Heart left ventricle (tissue), 16 donors: ENCODE measurements at regions of chr3 and their contacts with region 1.

Region 1: DNA sequence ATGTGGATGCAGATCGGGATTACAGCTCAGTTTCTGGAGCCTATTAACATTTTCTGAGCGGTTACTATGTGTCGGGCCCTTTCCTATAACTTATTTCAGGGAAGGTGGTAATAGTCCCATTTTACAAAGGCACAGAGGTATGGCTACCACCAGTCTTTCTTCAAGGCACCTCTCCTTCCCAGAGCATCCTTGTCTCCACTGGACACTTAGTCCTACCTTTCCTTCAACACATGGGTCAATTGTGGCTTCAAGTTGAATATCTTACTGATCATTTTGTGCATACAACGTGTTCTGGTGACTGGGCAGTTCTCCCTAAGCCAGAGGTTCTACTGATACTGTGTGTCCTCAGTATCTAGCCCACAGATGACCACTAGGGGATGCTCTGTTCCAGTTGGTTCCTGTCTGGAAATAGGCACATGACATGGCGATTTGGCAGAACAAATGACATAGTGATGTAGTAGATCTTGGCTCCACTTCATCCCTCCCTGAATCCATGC is 60.7 kb upstream of the CMTM8 start:
- DNase-seq: peak in 4 of 5 donors; percentile 64 to 76 (median 69)
- ATAC-seq: peak; percentile 82 to 93 (median 92)
- H3K4me3 ChIP-seq: no peak overlapping the region
- H3K27ac ChIP-seq: no peak overlapping the region
- H3K4me1 ChIP-seq: peaks cover 0 to 12% (median 7%) of the 10 kb centered on the region in 12 donors
- H3K27me3 ChIP-seq: no peaks in the 10 kb centered on the region
- CTCF ChIP-seq: peak; percentile 67 to 82 (median 76)
- POLR2A ChIP-seq: no peak

Region 2: DNA sequence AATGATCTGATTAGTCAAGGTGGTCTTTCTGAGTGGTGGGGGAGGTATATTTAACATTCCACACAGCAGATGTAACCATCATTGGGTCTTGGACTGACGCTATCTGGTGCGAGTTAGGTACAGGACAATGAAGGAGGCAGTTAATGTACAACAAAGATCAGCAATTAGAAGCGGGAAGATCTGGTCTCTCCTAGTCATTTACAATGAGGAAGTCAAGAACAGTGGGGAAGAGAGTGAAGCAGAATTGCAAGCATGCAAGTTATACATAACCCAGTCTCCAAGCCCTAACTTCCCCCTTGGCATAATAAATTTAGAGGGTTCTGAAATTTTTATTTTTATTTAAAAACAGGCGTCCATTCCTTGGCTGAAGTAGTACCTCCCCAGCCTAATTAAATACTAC is 57.3 kb before region 1 on chr3:
- intact Hi-C with region 1: no loop called
- DNase-seq: no peak
- ATAC-seq: peak in 2 of 4 donors; percentile 45 to 56
- H3K4me3 ChIP-seq: no peak overlapping the region
- H3K27ac ChIP-seq: peak overlapping the region in 2 of 12 donors; percentile 1 to 47
- H3K4me1 ChIP-seq: peaks cover 0 to 61% (median 11%) of the 10 kb centered on the region in 12 donors
- H3K27me3 ChIP-seq: no peaks in the 10 kb centered on the region
- CTCF ChIP-seq: no peak
- POLR2A ChIP-seq: no peak

Region 3: DNA sequence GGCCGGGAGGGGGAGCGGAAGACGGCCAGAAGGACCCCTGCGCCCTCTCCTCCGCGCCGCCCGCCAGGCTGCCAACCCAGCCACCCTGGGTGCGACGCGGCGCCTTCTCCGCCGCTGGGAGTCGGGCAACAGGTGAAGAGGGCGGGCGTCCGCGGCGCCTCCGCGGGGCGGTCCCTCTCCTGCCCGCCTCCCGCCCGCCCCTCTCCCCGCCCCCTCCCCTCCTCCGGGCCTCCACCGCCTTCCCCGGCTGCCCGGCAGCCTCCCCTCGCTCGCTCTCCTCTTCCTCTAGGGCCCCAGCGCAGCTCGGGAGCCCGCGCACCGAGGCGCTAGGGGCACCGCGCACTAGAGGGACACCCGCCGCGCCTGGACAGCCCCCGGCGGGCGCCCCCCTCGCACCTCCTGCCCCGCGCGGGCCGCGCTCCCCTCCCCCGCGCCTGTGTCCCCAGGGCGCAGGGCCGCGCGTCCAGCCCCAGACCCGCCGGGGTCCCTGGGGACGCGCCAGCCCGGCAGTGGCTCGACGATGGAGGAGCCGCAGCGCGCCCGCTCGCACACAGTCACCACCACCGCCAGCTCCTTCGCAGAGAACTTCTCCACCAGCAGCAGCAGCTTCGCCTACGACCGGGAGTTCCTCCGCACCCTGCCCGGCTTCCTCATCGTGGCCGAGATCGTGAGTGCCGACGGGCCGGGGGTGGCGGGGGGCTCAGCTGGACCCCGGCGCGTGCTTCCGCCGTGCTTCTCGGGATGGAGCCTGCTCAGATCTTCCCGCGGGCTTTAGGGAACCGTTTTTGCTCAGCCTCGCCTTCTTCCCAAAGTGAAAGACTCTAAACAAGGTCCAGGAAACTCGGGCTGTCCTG is 60.9 kb after region 1 on chr3 and contains the start of gene CMTM8:
- intact Hi-C with region 1: loop called in 6 of 10 experiments (anchors 2 to 5 kb)
- DNase-seq: peak; percentile 52 to 73 (median 61)
- ATAC-seq: peak; percentile 27 to 87 (median 80)
- H3K4me3 ChIP-seq: peak within 1 kb of the TSS; percentile 50 to 95 (median 72)
- H3K27ac ChIP-seq: peak within 1 kb of the TSS; percentile 53 to 92 (median 83)
- H3K4me1 ChIP-seq: peaks cover 0 to 24% (median 8%) of the 10 kb centered on the region in 12 donors
- H3K27me3 ChIP-seq: peaks cover 0 to 14% (median 0%) of the 10 kb centered on the region in 9 donors
- CTCF ChIP-seq: no peak
- POLR2A ChIP-seq: no peak
- total RNA-seq, gene CMTM8: 1.7 to 12.1 (median 3.5) TPM

Region 4: DNA sequence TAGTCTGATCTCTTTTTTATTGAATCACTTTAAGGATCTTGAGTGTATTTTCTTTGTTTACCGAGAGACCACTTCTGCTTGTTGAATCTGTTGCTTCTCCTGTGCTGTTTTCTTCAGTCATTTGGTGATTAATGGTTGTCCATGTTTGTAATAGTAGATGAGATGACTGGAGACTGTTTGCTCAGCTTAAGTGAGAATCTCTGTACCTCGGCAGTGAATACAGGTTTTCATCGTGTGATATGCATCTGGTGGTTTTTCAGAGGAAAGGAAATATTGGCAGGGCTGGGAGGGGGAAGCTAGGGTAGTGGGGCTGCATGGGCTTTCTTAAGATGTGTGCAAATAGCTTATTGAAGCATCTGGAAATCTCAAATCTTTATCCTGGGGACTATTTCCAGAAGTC is 79.9 kb after region 1 on chr3:
- intact Hi-C with region 1: no loop called
- DNase-seq: no peak
- ATAC-seq: no peak
- H3K4me3 ChIP-seq: no peak overlapping the region
- H3K27ac ChIP-seq: no peak overlapping the region
- H3K4me1 ChIP-seq: no peaks in the 10 kb centered on the region
- H3K27me3 ChIP-seq: no peaks in the 10 kb centered on the region
- CTCF ChIP-seq: no peak
- POLR2A ChIP-seq: no peak

Region 5: DNA sequence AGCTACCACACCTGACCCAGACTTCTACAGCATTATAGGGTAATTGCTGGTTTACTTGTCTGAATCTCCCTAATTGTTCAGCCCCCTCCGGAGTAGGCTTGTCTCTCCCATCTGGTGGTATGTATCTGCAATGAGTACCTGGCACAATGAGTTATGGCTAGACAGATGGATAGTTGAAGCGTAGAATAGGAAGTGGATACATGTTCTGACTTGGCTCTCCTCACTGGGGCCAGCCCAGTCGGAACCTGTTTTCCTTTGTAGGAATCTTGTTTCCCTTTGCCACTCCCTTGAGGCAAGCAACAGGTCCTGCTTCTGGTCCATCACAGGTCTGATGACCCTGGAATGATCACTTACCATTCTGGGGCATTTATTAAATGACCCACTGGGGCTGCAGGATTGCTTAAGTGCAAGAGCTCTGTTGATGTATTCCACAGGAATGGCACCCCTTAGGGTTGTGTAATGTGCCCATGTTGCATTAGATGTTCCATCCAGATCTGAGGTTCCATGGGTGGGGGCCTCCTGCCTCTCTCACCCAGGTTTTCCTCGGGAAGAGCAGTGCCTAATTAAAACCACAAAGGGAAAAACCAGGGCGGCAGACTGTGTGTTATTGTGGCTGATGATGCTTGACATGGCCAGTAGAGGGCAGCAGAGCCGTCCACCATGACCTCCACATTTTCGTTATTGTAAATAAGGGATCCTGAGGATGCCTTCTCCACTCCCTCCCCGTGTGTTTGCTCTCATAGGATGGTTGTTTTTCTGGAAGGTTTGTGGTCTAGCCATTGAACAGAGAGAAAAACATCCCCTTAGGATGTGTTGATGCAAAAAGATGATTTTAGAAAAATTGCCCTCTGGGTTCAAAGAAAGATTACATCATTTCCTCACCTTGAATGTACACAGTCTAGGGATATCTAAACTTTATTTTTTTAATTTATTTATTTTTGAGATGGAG is 118.8 kb after region 1 on chr3:
- intact Hi-C with region 1: loop called in 8 of 10 experiments (anchors 2 to 10 kb)
- DNase-seq: peak; percentile 42 to 62 (median 61)
- ATAC-seq: peak; percentile 45 to 86 (median 84)
- H3K4me3 ChIP-seq: no peak overlapping the region
- H3K27ac ChIP-seq: no peak overlapping the region
- H3K4me1 ChIP-seq: peaks cover 0 to 13% (median 3%) of the 10 kb centered on the region in 12 donors
- H3K27me3 ChIP-seq: no peaks in the 10 kb centered on the region
- CTCF ChIP-seq: peak; percentile 80 to 92 (median 87)
- POLR2A ChIP-seq: no peak

Region 6: DNA sequence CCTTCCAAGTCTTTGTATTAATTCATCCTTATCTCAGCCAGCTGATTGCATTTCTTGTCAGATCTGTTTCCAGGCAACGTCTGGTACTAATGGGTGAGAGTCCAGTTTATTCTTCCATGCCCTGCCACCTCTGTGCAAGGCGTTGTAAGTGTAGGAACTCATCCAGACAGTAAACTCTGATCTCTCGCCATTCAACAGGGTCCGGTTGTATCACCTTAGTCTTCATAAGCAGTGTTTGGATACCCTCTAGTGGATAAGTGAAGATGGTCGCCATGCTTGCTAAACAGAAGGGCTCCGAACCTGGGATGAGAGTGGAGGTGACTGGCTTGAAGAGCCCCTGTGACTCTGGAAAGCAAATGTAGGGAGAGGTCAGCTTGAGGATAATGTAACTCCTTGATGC is 162.3 kb after region 1 on chr3:
- intact Hi-C with region 1: loop called (anchors 1 to 5 kb)
- DNase-seq: no peak
- ATAC-seq: peak; percentile 55 to 90 (median 84)
- H3K4me3 ChIP-seq: no peak overlapping the region
- H3K27ac ChIP-seq: no peak overlapping the region
- H3K4me1 ChIP-seq: peaks cover 0 to 14% (median 0%) of the 10 kb centered on the region in 12 donors
- H3K27me3 ChIP-seq: no peaks in the 10 kb centered on the region
- CTCF ChIP-seq: peak in 11 of 12 donors; percentile 34 to 67 (median 54)
- POLR2A ChIP-seq: no peak

Region 7: GRCh38 chr3:32401556-32402081 is 223.9 kb after region 1 on chr3:
- intact Hi-C with region 1: loop called in 6 of 10 experiments (anchors 2 to 10 kb)
- DNase-seq: peak; percentile 85 to 94 (median 86)
- ATAC-seq: peak; percentile 70 to 94 (median 90)
- H3K4me3 ChIP-seq: peak overlapping the region; percentile 2 to 61 (median 50)
- H3K27ac ChIP-seq: peak overlapping the region; percentile 70 to 97 (median 86)
- H3K4me1 ChIP-seq: peaks cover 0 to 93% (median 27%) of the 10 kb centered on the region in 12 donors
- H3K27me3 ChIP-seq: no peaks in the 10 kb centered on the region
- CTCF ChIP-seq: no peak
- POLR2A ChIP-seq: peak in 1 of 2 donors; percentile 25